IMR-90 (cell line): ENCODE measurements at regions of chr6 and their contacts with region 1.

Region 1: GRCh38 chr6:169536446-169537170 is 165.2 kb downstream of the WDR27 start:
- DNase-seq: peak; percentile 93
- ATAC-seq: peak; percentile 80
- H3K4me3 ChIP-seq: no peak overlapping the region
- H3K27ac ChIP-seq: peak overlapping the region; percentile 87; the same call in 1 of the 2 replicates
- H3K4me1 ChIP-seq: peaks cover 13% of the 10 kb centered on the region
- H3K27me3 ChIP-seq: no peaks in the 10 kb centered on the region
- CTCF ChIP-seq: no peak
- POLR2A ChIP-seq: no peak
- RAD21 ChIP-seq: no peak

Region 2: GRCh38 chr6:169212897-169213813 is 323.5 kb before region 1 on chr6:
- CTCF ChIA-PET with region 1: no interaction called
- POLR2A ChIA-PET with region 1: no interaction called
- dilution Hi-C with region 1: no loop called
- in situ Hi-C with region 1: no loop called
- intact Hi-C with region 1: no loop called
- DNase-seq: peak; percentile 84
- ATAC-seq: peak; percentile 95
- H3K4me3 ChIP-seq: no peak overlapping the region; the same call in 1 of the 2 replicates
- H3K27ac ChIP-seq: peak overlapping the region; percentile 95
- H3K4me1 ChIP-seq: peaks cover 19% of the 10 kb centered on the region
- H3K27me3 ChIP-seq: no peaks in the 10 kb centered on the region
- CTCF ChIP-seq: peak; percentile 48
- POLR2A ChIP-seq: 0 out of 2 replicates have a peak, but pooled peaks have one; percentile 24
- RAD21 ChIP-seq: peak; percentile 30

Region 3: GRCh38 chr6:169589293-169589692 is 52.7 kb after region 1 on chr6:
- CTCF ChIA-PET with region 1: no interaction called
- POLR2A ChIA-PET with region 1: no interaction called
- dilution Hi-C with region 1: no loop called
- in situ Hi-C with region 1: no loop called
- intact Hi-C with region 1: loop called (anchors 5 kb)
- DNase-seq: no peak
- ATAC-seq: no peak
- H3K4me3 ChIP-seq: no peak overlapping the region
- H3K27ac ChIP-seq: no peak overlapping the region
- H3K4me1 ChIP-seq: peaks cover 5% of the 10 kb centered on the region
- H3K27me3 ChIP-seq: no peaks in the 10 kb centered on the region
- CTCF ChIP-seq: no peak
- POLR2A ChIP-seq: no peak
- RAD21 ChIP-seq: no peak

Region 4: DNA sequence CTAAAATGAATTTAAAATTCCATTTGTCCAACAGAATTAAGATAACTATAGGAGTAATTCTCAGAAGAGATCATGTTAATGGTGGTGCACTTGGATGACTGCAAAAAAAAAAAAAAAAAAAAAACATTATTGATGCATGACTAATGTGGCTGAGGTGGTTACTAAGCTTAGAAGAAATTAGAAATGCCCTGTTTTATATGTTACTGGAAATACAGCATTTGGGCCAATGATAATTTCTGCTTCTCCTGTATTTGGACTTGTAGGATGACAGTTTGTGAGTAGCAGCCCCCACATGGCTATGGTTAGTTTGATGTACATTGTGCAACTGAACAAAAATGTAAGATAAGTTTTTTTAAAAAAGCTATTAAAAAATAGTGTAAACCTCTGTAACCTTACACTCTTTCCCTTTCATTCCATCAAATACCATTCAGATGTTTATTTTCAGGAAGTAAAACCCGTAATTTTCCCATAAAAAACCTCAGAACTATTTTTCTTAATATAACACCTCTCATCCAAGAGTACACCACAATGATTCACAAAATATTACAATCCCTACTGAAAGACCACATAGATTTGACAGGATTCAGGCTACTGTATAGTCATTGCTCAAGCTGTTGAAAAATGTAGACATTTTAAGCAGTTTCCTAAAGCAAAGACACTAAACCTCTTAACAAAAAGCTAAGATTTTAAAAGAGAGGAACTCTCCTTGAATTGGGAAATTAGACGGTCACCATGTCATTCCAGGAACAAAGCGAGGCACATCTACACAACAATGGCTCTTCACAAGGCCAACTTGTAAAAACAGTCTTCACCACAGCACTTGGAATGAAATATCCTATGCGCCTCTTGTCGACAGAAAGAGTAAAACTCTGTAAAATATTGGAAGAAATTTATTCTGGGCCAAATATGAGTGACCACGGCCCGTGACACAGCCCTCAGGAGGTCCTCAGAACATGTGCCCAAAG is 82.2 kb after region 1 on chr6:
- CTCF ChIA-PET with region 1: no interaction called
- POLR2A ChIA-PET with region 1: no interaction called
- dilution Hi-C with region 1: no loop called
- in situ Hi-C with region 1: no loop called
- intact Hi-C with region 1: loop called (anchors 1 kb)
- DNase-seq: peak; percentile 97
- ATAC-seq: peak; percentile 79
- H3K4me3 ChIP-seq: no peak overlapping the region
- H3K27ac ChIP-seq: peak overlapping the region; percentile 90
- H3K4me1 ChIP-seq: peaks cover 18% of the 10 kb centered on the region
- H3K27me3 ChIP-seq: no peaks in the 10 kb centered on the region
- CTCF ChIP-seq: no peak
- POLR2A ChIP-seq: no peak
- RAD21 ChIP-seq: no peak

Region 5: DNA sequence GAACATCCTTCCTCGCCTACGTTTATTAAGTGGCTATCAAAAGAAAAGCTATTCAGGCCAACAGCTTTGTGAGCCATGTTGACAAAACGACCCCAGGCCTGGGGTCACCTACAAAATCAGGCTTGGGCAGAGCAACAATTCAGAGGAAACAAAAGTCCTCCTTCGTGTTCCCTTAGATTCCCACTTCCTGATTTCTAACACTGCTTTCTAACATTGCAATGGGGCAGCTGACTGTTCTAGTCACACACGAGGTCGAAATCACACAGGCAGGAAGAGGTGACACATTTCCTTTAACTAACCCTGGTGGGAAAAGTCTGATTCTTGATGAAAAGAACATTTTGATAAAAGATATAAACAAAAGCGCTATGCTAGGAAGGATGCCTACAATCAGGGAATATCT is 133.3 kb after region 1 on chr6:
- CTCF ChIA-PET with region 1: no interaction called
- POLR2A ChIA-PET with region 1: no interaction called
- dilution Hi-C with region 1: no loop called
- in situ Hi-C with region 1: no loop called
- intact Hi-C with region 1: no loop called
- DNase-seq: peak; percentile 32
- ATAC-seq: no peak
- H3K4me3 ChIP-seq: no peak overlapping the region
- H3K27ac ChIP-seq: no peak overlapping the region
- H3K4me1 ChIP-seq: no peaks in the 10 kb centered on the region
- H3K27me3 ChIP-seq: no peaks in the 10 kb centered on the region
- CTCF ChIP-seq: no peak
- POLR2A ChIP-seq: no peak
- RAD21 ChIP-seq: no peak